Activated T-helper 1 cell treated with anti-CD3 and anti-CD28 coated beads, Interleukin-12 subunit alpha, Interleukin-12 subunit beta, Interleukin-2, Interleukin-4 antibody, amounts not matched to agents 30 ng/mL and 10 ng/mL and 1 ng/mL, durations not matched to agents 14 hours and 24 hours and 36 hours (primary cell): ENCODE measurements at regions of chr22 and their contacts with region 1.

Region 1: DNA sequence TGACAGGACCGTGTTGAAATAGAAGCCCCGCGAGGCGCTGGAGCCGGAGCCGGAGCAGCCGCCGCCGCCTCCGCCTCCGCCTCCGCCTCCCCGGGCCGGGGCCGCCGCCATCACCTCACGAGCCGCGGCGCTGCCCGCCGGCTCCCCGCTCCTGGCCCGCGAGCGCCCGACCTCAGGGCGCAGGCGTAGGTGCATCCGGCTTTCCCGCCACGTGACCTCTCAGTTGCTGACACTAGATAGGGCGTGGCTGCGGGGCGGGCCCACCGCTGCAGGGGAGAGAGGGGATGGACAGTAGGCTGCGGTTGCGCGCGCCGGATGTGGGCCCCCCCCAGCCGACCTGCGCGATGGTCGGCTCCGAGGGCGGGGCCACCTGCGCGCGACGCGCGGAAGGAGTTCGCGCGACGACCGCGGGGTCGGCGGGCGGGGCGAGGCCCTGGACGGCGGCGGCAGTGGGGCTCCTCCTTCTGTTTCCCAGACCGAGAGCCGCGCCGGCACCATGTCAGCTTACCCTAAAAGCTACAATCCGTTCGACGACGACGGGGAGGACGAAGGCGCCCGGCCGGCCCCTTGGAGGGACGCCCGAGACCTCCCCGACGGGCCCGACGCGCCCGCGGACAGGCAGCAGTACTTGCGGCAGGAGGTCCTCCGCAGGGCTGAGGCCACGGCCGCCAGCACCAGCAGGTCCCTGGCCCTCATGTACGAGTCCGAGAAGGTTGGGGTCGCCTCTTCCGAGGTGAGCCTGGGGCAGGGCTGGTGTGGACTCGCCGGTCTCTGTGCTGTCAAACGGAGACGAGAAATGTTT is at the starts of genes PI4KA and SNAP29:
- DNase-seq: peak; percentile 97
- H3K4me3 Mint-ChIP-seq: peak within 1 kb of the TSS; percentile 85
- H3K27ac Mint-ChIP-seq: peak within 1 kb of the TSS; percentile 88
- H3K4me1 Mint-ChIP-seq: peaks cover 51% of the 10 kb centered on the region
- H3K27me3 Mint-ChIP-seq: peaks cover 2% of the 10 kb centered on the region
- total RNA-seq, gene PI4KA: 80.4 and 84.7 TPM in 2 replicates
- total RNA-seq, gene SNAP29: 24.6 and 27.7 TPM in 2 replicates

Region 2: GRCh38 chr22:20523086-20523983 is 335.5 kb before region 1 on chr22:
- intact Hi-C with region 1: no loop called
- DNase-seq: no peak
- H3K4me3 Mint-ChIP-seq: peak overlapping the region; percentile 19
- H3K27ac Mint-ChIP-seq: peak overlapping the region; percentile 47
- H3K4me1 Mint-ChIP-seq: peaks cover 56% of the 10 kb centered on the region
- H3K27me3 Mint-ChIP-seq: no peaks in the 10 kb centered on the region

Region 3: GRCh38 chr22:20783844-20784723 is 74.7 kb before region 1 on chr22:
- intact Hi-C with region 1: loop called (anchors 5 kb)
- DNase-seq: peak; percentile 6
- H3K4me3 Mint-ChIP-seq: no peak overlapping the region
- H3K27ac Mint-ChIP-seq: no peak overlapping the region
- H3K4me1 Mint-ChIP-seq: peaks cover 7% of the 10 kb centered on the region
- H3K27me3 Mint-ChIP-seq: no peaks in the 10 kb centered on the region

Region 4: GRCh38 chr22:20916983-20917810 is 58.4 kb after region 1 on chr22 and contains the start of gene CRKL:
- intact Hi-C with region 1: loop called (anchors 1 kb)
- DNase-seq: peak; percentile 96
- H3K4me3 Mint-ChIP-seq: peak within 1 kb of the TSS; percentile 99
- H3K27ac Mint-ChIP-seq: peak within 1 kb of the TSS; percentile 88
- H3K4me1 Mint-ChIP-seq: peaks cover 34% of the 10 kb centered on the region
- H3K27me3 Mint-ChIP-seq: peaks cover 3% of the 10 kb centered on the region
- total RNA-seq, gene CRKL: 78.2 and 79.2 TPM in 2 replicates